ENCODE measurements at regions of chr6 and their contacts with region 1.

Region 1: DNA sequence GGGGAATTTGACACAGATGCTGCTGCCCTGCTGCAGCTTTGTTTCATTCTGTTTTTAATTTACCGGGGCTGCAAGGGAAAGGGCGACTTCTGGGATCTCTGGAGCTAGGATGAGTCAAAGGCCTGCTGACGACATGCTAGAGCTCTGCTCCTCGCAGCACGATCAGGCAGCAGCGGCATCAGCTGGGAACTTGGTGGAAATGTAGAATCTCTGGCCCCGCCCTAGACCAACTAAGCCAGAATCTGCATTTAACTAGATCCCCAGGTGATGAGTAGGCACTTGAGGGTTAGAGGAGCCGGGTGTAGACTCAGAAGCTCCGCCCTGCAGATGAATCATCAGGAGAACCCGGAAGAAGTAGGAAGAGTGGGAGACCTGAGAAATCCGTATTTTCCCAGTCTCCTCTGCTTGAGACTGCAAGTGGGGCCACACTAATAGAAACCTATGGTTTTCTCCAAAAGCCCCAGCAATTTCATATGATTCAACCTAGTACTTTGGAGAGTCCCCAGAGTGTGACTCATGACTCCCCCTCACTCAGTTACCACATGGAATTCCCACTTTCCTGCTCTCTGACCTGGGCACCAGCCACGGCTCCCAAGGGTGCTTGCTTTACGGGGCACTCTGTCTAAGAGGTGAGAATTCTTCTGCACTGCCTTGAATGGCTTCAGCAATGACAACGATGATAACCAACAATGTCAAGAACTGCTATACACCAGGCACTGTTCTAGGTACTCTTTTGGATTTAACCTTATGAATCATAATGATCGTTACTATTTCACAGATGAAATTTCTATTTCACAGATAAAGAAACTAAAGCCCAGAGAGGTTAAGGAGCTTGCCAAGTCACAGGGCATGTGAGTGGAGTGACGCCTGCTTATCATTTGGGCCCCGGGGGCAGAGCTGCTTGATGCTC is 18.1 kb downstream of the TUBB2B start:
- DNase-seq: peak; percentile 81
- H3K4me3 Mint-ChIP-seq: peak overlapping the region; percentile 13
- H3K27ac Mint-ChIP-seq: peak overlapping the region; percentile 88
- H3K4me1 Mint-ChIP-seq: peaks cover 23% of the 10 kb centered on the region
- H3K27me3 Mint-ChIP-seq: peaks cover 39% of the 10 kb centered on the region

Region 2: DNA sequence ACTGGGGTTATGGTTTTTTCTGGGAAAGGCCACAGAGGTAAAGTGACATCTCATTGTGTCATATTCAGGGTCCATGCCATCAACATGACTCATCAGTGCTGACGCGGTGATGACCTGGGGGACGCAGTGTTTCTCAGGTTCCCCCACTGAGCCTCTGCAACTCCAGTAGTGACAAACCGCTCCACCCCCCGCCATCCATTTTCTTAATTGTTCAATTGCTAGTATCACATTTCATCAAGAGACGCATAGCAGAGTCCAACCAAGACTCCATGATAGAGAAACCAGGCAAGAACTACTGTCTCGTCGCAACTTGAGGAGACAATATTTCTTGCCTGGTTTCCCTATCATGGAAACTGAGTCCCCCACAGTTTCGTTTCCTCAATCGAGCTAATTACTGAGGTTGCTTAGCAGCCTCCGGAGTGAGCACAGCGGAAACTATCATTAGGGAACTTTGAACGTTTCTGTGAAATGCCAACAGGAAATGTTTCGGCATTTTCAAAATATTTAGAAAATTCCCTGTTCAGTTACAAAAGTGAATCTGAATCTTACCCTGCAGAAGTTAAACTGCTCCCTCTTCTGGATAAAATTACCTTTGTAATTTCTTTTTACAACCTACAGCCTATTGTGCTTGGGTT is 355.5 kb before region 1 on chr6:
- CTCF ChIA-PET with region 1: no interaction called
- intact Hi-C with region 1: loop called (anchors 5 kb)
- DNase-seq: peak; percentile 96
- H3K4me3 Mint-ChIP-seq: peak overlapping the region; percentile 59
- H3K27ac Mint-ChIP-seq: peak overlapping the region; percentile 100
- H3K4me1 Mint-ChIP-seq: peaks cover 64% of the 10 kb centered on the region
- H3K27me3 Mint-ChIP-seq: no peaks in the 10 kb centered on the region

Region 3: DNA sequence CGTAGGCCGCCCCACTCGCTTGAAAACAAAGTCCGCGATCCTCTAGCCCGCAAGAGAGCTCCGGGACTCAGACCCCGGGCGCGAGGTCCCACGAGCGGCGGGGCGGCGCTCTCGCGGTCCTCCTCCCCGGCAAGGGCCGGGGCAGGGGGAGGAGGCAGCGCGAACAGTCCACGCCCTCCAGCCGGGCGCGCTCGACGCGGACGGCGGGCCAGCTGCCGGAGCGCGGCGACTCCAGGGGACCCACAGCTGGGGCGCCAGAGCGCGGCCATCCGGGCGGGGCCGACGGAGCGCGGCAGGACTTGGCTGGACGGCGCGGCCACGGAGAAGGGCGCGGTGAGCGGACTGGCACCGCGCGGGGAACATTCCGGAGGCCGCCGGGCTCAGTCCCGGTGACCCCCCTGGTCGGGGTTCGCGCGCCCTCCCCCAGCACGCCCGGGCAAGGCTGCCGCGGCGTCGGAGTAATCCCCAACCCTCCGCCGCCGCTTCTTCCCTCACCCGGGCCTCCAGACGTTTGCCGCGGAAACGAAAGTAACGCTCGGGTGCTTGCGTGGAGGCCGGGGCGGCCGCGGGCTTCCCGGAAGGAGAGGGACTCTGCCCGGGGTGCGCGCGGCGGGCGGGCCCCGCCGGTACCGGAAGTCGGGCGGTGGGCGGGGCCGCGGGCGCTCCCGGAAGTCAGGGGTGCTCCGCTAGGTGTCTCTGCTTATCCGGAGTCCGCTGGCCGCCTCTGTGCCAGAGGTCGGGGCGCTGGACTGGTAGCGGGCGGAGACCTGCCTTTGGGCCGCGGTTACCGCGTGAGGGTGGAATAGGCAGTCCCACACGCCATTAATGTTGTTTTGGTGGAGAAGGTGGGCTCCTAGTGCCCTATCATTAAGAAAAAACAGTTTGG is 140.8 kb before region 1 on chr6 and contains the start of gene RIPK1:
- CTCF ChIA-PET with region 1: no interaction called
- intact Hi-C with region 1: loop called (anchors 1 kb)
- DNase-seq: peak; percentile 95
- H3K4me3 Mint-ChIP-seq: peak within 1 kb of the TSS; percentile 92
- H3K27ac Mint-ChIP-seq: peak within 1 kb of the TSS; percentile 97
- H3K4me1 Mint-ChIP-seq: peaks cover 49% of the 10 kb centered on the region
- H3K27me3 Mint-ChIP-seq: no peaks in the 10 kb centered on the region
- total RNA-seq, gene RIPK1: 8.8 to 10.1 TPM

Region 4: DNA sequence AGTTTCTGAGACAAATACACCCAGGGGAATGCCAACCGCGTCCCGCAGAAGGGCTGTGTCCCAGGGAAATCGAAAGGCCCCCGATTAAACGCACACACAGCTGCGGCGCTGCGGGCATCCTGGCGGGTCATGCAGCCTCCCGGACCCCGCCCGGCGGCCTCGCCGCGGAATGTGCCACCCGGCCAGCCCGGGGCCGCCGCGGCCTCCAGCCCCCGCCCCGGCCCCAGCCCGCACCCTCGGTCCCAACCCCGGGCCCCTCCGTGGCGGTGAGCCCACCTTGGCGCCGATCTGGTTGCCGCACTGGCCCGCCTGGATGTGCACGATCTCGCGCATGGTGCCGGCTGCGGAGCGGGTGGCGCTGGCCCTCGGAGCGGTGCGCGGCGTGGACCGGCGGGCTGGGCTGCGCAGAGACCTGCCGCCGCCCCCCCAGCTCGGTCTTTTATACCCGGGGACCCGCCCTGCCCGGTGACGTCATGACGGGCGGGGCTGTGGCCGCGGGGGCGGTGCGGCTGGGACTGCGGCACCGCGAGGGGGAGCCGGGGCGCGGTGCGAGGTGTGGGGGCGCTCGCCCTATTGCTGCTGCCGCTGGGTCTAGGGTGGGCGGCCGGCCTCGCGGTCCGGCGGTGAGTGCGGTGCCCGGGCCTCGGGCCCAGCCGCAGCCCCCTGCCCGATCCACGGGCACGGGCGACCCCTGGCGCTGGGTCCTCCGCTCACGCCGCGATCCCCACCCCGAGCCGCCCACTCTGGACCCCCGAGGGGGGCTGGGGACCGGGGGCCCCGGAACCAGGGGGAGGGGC is 52.0 kb before region 1 on chr6 and contains the start of gene TUBB2A:
- CTCF ChIA-PET with region 1: interaction called, 8 read pairs
- intact Hi-C with region 1: loop called (anchors 1 kb)
- DNase-seq: peak; percentile 78
- H3K4me3 Mint-ChIP-seq: peak within 1 kb of the TSS; percentile 74
- H3K27ac Mint-ChIP-seq: no peak within 1 kb of the TSS
- H3K4me1 Mint-ChIP-seq: peaks cover 18% of the 10 kb centered on the region
- H3K27me3 Mint-ChIP-seq: peaks cover 18% of the 10 kb centered on the region
- total RNA-seq, gene TUBB2A: 1.0 to 1.2 TPM

Region 5: GRCh38 chr6:3231247-3232016 is 22.1 kb after region 1 on chr6:
- CTCF ChIA-PET with region 1: interaction called, 3 read pairs
- intact Hi-C with region 1: loop called (anchors 1 kb)
- DNase-seq: no peak
- H3K4me3 Mint-ChIP-seq: peak overlapping the region; percentile 50
- H3K27ac Mint-ChIP-seq: no peak overlapping the region
- H3K4me1 Mint-ChIP-seq: peaks cover 43% of the 10 kb centered on the region
- H3K27me3 Mint-ChIP-seq: peaks cover 72% of the 10 kb centered on the region

Region 6: GRCh38 chr6:3356056-3356761 is 146.8 kb after region 1 on chr6:
- CTCF ChIA-PET with region 1: no interaction called
- intact Hi-C with region 1: loop called (anchors 5 kb)
- DNase-seq: peak; percentile 68
- H3K4me3 Mint-ChIP-seq: peak overlapping the region; percentile 63
- H3K27ac Mint-ChIP-seq: peak overlapping the region; percentile 15
- H3K4me1 Mint-ChIP-seq: peaks cover 25% of the 10 kb centered on the region
- H3K27me3 Mint-ChIP-seq: no peaks in the 10 kb centered on the region